ENCODE measurements at regions of chr10 and their contacts with region 1.

Region 1: DNA sequence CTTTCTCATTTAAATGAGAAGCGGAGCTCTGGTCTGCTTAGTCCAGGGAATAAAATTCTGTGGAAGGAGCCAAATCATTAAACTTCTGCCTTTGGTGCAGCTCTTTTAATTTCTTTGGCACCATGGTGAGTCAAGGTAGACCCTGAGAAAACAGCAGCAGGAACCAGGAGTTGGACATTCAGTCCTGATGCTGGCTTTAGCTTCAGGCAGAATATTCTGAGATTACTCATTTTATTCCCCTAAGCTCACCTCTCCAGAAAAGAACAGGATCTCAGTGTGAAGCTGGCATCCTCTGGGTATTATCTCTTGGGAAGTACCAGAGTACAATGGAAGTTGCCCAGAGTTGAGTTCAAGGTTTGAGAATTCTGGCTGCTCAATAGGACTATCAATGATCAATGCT is 211.6 kb upstream of the NRP1 start:
- DNase-seq: no peak
- H3K4me3 ChIP-seq: no peak overlapping the region
- H3K27ac ChIP-seq: no peak overlapping the region
- H3K4me1 ChIP-seq: no peaks in the 10 kb centered on the region
- H3K27me3 ChIP-seq: no peaks in the 10 kb centered on the region
- CTCF ChIP-seq: no peak
- EP300 ChIP-seq: no peak
- RAD21 ChIP-seq: no peak

Region 2: DNA sequence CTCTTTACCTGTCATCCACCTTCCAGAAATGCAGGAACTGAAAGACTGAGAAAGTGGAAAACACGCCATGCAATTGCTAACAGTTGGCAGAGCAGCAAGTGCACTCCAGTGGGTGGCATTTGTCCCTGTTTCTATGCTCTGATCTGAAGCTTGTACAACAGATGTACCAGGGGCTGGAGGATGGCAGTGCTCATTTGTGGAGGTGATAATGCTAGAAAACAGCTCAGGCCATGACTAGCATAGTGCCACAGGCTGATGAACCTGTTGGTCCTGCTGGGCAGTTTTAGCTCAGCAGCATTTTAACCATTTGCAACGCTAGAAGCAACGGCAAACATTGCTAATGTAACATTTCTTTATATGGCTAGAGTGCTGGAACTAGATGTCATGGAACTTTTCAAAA is 11.6 kb before region 1 on chr10:
- CTCF ChIA-PET with region 1: interaction called, 10 read pairs
- POLR2A ChIA-PET with region 1: no interaction called
- DNase-seq: no peak
- H3K4me3 ChIP-seq: no peak overlapping the region
- H3K27ac ChIP-seq: no peak overlapping the region
- H3K4me1 ChIP-seq: peaks cover 0 to 7% of the 10 kb centered on the region in 2 experiments; a peak in 2 of 4 replicates
- H3K27me3 ChIP-seq: no peaks in the 10 kb centered on the region
- CTCF ChIP-seq: no peak
- EP300 ChIP-seq: no peak
- RAD21 ChIP-seq: no peak